SK-N-SH (cell line): ENCODE measurements at regions of chr10 and their contacts with region 1.

Region 1: DNA sequence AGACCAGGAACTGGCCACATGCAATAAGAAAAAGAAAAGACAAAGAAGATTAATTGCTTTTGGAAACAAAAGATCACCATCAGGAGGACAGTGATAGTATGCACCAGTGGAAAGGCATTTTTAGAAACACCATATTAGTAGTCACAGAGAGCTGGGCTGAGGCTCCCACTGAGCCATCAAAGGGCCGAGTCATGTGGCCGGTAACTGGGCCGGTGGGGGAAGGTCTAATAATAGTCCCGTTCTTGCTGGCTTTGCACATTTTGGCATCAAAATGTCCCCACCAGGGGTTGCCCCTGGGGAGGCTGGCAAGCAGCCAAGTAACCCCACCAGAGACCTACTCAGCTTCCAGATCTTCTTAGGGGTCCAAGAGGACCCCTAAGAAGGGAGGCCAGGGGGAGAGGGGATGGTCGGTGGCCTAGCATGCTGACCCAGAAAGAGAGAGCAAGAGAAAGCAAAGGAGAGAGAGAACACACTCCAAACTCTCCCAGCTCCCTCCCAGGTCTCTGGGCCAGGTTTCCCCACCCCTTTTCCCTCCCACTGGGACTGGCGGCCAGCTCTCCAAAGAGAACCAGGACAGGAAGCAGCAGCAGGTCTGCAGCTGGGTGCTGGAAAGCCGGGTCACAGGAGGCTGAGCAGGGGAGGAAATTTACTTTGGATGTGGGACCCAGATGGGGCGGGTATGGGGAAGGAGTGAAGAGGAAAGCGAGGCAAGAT is 70.2 kb upstream of the FGFR2 start:
- DNase-seq: peak; percentile 90
- H3K4me3 ChIP-seq: no peak overlapping the region
- H3K27ac ChIP-seq: peak overlapping the region in 1 of 2 experiments; percentile 97; a peak in 2 of 4 replicates
- H3K4me1 ChIP-seq: peaks cover 7 to 22% of the 10 kb centered on the region in 2 experiments; a peak in 3 of 4 replicates
- H3K27me3 ChIP-seq: no peaks in the 10 kb centered on the region
- CTCF ChIP-seq: no peak
- EP300 ChIP-seq: peak in 1 of 2 experiments; percentile 44; a peak in 2 of 4 replicates
- RAD21 ChIP-seq: peak; percentile 6; the same call in 1 of the 2 replicates

Region 2: GRCh38 chr10:121490871-121491519 is 177.5 kb before region 1 on chr10:
- CTCF ChIA-PET with region 1: no interaction called
- POLR2A ChIA-PET with region 1: no interaction called
- DNase-seq: no peak
- H3K4me3 ChIP-seq: no peak overlapping the region
- H3K27ac ChIP-seq: no peak overlapping the region
- H3K4me1 ChIP-seq: no peaks in the 10 kb centered on the region; a peak in 1 of 4 replicates
- H3K27me3 ChIP-seq: no peaks in the 10 kb centered on the region
- CTCF ChIP-seq: no peak
- EP300 ChIP-seq: no peak
- RAD21 ChIP-seq: no peak

Region 3: GRCh38 chr10:121627821-121628581 is 40.5 kb before region 1 on chr10:
- CTCF ChIA-PET with region 1: interaction called, 3 read pairs
- POLR2A ChIA-PET with region 1: interaction called, 10 read pairs
- DNase-seq: no peak
- H3K4me3 ChIP-seq: no peak overlapping the region
- H3K27ac ChIP-seq: no peak overlapping the region
- H3K4me1 ChIP-seq: peaks cover 0 to 5% of the 10 kb centered on the region in 2 experiments; a peak in 1 of 4 replicates
- H3K27me3 ChIP-seq: no peaks in the 10 kb centered on the region
- CTCF ChIP-seq: no peak
- EP300 ChIP-seq: no peak
- RAD21 ChIP-seq: no peak